ENCODE measurements at regions of chr4 and their contacts with region 1.

Region 1: GRCh38 chr4:71553605-71554004 is 214.8 kb downstream of the SLC4A4 start:
- DNase-seq: no peak
- H3K4me3 ChIP-seq: no peak overlapping the region
- H3K27ac ChIP-seq: no peak overlapping the region
- H3K4me1 ChIP-seq: no peaks in the 10 kb centered on the region
- H3K27me3 ChIP-seq: peaks cover 0 to 2% of the 10 kb centered on the region in 2 experiments
- CTCF ChIP-seq: no peak
- POLR2A ChIP-seq: no peak

Region 2: DNA sequence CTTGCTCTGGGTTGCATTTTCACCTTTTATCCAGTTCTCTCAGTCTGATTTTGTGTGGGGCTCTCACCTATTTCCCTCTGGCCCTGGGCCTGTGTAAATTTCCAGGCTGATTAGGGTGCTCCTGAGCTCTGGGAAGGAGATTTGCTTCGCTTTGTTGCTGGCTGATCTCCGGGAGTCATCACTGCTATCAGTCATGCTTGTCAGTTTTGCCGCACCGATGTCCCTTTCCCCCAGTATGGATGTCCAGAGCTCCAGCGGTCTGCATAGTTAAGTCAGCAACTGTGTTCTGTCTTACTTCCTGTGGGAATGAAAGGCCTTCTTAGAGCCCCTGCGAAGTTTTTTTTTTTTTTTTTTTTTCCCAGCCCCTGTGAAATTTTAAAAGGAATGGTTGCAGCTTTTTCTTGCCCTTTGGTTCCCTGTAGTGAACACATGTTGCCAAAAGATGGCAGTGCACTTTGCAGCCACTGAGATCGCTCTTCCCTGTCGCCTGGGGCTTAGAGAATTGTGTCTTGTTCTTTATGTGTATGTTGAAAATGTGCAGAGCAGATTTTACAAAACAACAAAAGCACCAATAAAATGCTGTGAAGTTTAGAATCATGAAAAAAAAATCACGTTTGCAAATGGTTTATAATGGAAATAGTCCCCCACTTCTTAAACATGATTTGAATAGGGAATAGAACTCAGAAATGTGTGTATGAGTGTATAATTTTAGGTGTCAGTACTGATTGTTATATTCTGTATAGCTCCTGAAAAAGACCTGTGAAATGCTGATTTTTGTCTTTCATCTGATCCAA is 323.9 kb before region 1 on chr4:
- CTCF ChIA-PET with region 1: interaction called, 3 read pairs
- POLR2A ChIA-PET with region 1: no interaction called
- dilution Hi-C with region 1: no loop called
- intact Hi-C with region 1: loop called (anchors 5 kb)
- DNase-seq: peak; percentile 13
- H3K4me3 ChIP-seq: no peak overlapping the region
- H3K27ac ChIP-seq: no peak overlapping the region
- H3K4me1 ChIP-seq: no peaks in the 10 kb centered on the region
- H3K27me3 ChIP-seq: no peaks in the 10 kb centered on the region
- CTCF ChIP-seq: peak; percentile 17 to 56
- POLR2A ChIP-seq: no peak

Region 3: DNA sequence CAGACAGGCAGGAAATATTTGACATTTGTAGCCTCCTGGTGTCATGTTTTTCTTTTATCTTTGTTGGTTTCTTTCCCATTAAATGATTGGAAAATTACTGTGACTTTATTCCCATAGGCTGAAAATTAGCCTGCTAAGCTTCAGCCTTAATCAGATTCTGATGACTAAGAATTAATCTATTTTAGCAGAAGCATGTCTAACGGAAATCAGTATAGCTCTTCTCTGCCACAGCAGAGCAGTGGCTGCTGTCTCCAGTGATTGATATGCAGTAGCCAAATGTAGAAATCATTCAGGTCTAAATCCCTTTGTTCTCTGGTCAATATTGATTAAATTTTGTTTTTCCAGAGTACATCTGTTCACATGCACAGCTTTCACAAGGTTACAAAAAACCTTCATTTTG is 31.0 kb after region 1 on chr4:
- CTCF ChIA-PET with region 1: no interaction called
- POLR2A ChIA-PET with region 1: no interaction called
- dilution Hi-C with region 1: no loop called
- intact Hi-C with region 1: no loop called
- DNase-seq: no peak
- H3K4me3 ChIP-seq: no peak overlapping the region
- H3K27ac ChIP-seq: no peak overlapping the region
- H3K4me1 ChIP-seq: no peaks in the 10 kb centered on the region
- H3K27me3 ChIP-seq: no peaks in the 10 kb centered on the region
- CTCF ChIP-seq: no peak
- POLR2A ChIP-seq: no peak

Region 4: DNA sequence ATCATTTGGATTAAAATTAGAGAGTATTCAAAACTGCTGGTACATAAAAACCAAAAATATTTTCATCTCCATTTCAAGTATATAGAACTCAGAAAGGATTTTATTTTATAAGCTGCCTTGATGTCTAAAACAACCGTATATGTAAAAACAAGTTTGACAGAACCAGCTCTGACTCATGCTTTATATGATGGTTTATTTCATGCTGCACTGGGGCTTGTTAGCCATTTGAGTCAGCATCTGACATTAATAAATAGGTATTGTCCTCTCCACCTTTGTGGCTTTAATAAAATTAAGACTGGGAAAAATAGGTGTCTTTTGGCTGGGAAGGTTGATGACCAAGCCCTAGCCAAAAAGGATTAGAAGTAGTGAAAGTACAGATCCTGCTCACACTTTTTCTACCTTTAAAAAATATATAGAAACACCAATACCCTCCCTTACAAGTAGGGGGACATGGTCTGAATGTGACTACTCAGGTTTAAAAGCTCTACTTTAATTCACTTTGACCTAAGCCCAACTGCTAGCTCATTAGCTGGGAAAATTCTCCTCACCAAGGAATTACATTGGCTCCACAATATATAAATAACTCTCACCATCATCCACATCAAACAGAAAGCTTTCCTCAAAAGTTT is 787.3 kb after region 1 on chr4:
- CTCF ChIA-PET with region 1: no interaction called
- POLR2A ChIA-PET with region 1: no interaction called
- dilution Hi-C with region 1: no loop called
- intact Hi-C with region 1: no loop called
- DNase-seq: no peak
- H3K4me3 ChIP-seq: no peak overlapping the region
- H3K27ac ChIP-seq: no peak overlapping the region
- H3K4me1 ChIP-seq: no peaks in the 10 kb centered on the region
- H3K27me3 ChIP-seq: no peaks in the 10 kb centered on the region
- CTCF ChIP-seq: no peak
- POLR2A ChIP-seq: no peak